K562 (cell line): ENCODE measurements at regions of chr11 and their contacts with region 1.

Region 1: GRCh38 chr11:66480117-66480938 is at the start of gene DPP3:
- DNase-seq: peak; percentile 98 to 100 (median 99)
- ATAC-seq: peak; percentile 98
- H3K4me3 ChIP-seq: peak within 1 kb of the TSS; percentile 65
- H3K27ac ChIP-seq: peak within 1 kb of the TSS; percentile 92
- H3K4me1 ChIP-seq: peaks cover 3 to 31% of the 10 kb centered on the region in 2 experiments; a peak in 4 of 5 replicates
- H3K27me3 ChIP-seq: no peaks in the 10 kb centered on the region
- CTCF ChIP-seq: no peak
- EP300 ChIP-seq: no peak
- POLR2A ChIP-seq: peak; percentile 94
- RAD21 ChIP-seq: 0 out of 4 replicates have a peak, but pooled peaks of 1 of the 2 experiments have one; percentile 6
- polyA plus RNA-seq, gene DPP3: 3.7 to 6.2 TPM

Region 2: GRCh38 chr11:66438504-66439466 is 41.5 kb before region 1 on chr11 and contains the start of gene MRPL11:
- CTCF ChIA-PET with region 1: interaction called, 4 read pairs
- POLR2A ChIA-PET with region 1: interaction called, 3 read pairs
- in situ Hi-C with region 1: no loop called
- intact Hi-C with region 1: loop called (anchors 1 kb)
- DNase-seq: peak; percentile 93 to 96 (median 95)
- ATAC-seq: peak; percentile 99
- H3K4me3 ChIP-seq: peak within 1 kb of the TSS; percentile 86
- H3K27ac ChIP-seq: peak within 1 kb of the TSS; percentile 89
- H3K4me1 ChIP-seq: peaks cover 3 to 12% of the 10 kb centered on the region in 2 experiments; a peak in 3 of 5 replicates
- H3K27me3 ChIP-seq: peaks cover 0 to 10% of the 10 kb centered on the region in 2 experiments; a peak in 2 of 5 replicates
- CTCF ChIP-seq: peak; percentile 78 to 91 (median 91)
- EP300 ChIP-seq: no peak; the same call in 1 of the 2 replicates
- POLR2A ChIP-seq: peak; percentile 86
- RAD21 ChIP-seq: peak; percentile 49 to 66
- polyA plus RNA-seq, gene MRPL11: 33.0 to 43.5 TPM

Region 3: DNA sequence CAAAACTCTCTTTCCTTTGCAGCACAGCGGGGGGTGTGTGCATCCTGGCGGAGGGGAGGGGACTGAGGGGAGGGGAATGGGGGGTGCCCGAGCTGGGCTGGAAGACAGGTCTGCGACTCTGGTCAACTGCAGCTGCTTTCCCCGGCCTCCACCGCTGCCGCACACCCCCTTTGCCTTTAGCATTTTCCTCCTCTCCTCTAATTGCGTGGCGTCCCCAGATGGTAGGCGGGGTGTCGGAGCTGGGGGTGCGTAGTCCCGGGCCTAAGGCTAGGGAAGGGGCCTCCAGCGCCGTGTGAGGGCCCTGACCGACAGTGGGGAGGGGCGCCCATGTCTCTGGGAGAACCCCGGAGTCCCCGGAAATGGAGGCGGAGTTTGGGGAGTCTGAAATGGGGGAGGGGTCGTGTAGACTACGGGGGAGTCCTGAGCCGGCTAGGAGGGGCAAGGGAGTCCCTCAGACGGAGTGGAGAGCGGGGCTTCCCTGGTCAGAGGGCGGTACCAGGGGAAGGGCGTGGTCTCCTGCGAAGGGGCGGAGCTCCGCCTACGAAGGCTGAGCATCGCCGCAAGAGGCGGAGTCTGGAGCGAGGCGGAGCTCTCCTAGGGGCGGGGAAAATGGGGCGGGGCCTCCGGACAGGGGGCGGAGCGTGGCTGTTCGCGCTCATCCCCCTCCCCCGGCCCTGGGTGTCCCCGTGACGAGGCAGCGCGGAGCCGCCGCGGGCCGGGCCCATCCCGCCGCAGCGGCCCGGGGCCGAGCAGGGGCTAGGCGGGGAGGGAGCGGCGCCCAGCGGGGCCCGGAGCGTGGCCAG is 13.9 kb before region 1 on chr11 and contains the start of gene PELI3:
- CTCF ChIA-PET with region 1: no interaction called
- POLR2A ChIA-PET with region 1: interaction called, 18 read pairs
- in situ Hi-C with region 1: no loop called
- intact Hi-C with region 1: no loop called
- DNase-seq: peak; percentile 92 to 99 (median 98)
- ATAC-seq: peak; percentile 99
- H3K4me3 ChIP-seq: peak within 1 kb of the TSS; percentile 56
- H3K27ac ChIP-seq: peak within 1 kb of the TSS; percentile 23; the same call in 1 of the 3 replicates
- H3K4me1 ChIP-seq: peaks cover 0 to 24% of the 10 kb centered on the region in 2 experiments; a peak in 3 of 5 replicates
- H3K27me3 ChIP-seq: no peaks in the 10 kb centered on the region
- CTCF ChIP-seq: no peak
- EP300 ChIP-seq: no peak
- POLR2A ChIP-seq: no peak
- RAD21 ChIP-seq: no peak
- polyA plus RNA-seq, gene PELI3: 0.17 to 0.46 TPM

Region 4: DNA sequence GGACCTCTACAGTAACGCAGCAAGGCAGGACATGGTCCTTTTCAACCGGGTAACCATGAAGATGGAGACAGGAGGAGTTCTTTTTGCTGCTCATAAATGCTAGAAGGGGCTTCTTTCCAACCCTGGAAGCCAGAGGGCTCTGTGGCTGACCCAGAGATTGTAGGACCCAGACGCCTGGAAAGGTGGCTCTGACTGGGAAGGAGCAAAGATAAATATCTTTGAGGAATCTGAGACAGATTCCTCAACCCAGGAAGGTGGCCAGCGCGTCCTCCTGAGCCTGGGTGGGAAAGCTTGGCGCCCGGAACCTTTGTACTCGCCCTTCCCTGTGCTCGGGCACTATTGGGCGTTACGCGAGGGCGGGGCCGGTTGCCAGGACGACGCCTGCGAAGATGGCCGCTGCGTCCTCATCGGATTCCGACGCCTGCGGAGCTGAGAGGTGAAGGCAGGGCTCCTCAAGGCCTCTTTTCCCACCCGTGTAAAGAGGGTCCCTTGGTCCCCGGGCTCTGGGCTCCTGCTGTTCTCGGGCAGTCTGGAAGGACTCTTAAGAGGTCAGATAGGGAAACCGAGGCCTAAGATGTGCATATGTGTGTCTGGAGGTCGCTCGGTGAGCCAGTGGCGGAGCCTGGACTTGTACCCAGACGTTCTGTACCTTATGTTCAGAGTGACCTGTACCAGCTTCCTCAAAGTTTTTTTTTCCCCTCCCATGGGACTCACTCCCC is 30.1 kb after region 1 on chr11 and contains the start of gene BBS1:
- CTCF ChIA-PET with region 1: no interaction called
- POLR2A ChIA-PET with region 1: interaction called, 10 read pairs
- in situ Hi-C with region 1: no loop called
- intact Hi-C with region 1: no loop called
- DNase-seq: peak; percentile 88 to 91 (median 90)
- ATAC-seq: peak; percentile 100
- H3K4me3 ChIP-seq: peak within 1 kb of the TSS; percentile 70
- H3K27ac ChIP-seq: peak within 1 kb of the TSS; percentile 77
- H3K4me1 ChIP-seq: peaks cover 3 to 9% of the 10 kb centered on the region in 2 experiments; a peak in 4 of 5 replicates
- H3K27me3 ChIP-seq: no peaks in the 10 kb centered on the region
- CTCF ChIP-seq: no peak
- EP300 ChIP-seq: no peak
- POLR2A ChIP-seq: peak; percentile 78
- RAD21 ChIP-seq: no peak
- polyA plus RNA-seq, gene BBS1: 11.1 to 11.3 TPM